ENCODE measurements at regions of chr12 and their contacts with region 1.

Region 1: DNA sequence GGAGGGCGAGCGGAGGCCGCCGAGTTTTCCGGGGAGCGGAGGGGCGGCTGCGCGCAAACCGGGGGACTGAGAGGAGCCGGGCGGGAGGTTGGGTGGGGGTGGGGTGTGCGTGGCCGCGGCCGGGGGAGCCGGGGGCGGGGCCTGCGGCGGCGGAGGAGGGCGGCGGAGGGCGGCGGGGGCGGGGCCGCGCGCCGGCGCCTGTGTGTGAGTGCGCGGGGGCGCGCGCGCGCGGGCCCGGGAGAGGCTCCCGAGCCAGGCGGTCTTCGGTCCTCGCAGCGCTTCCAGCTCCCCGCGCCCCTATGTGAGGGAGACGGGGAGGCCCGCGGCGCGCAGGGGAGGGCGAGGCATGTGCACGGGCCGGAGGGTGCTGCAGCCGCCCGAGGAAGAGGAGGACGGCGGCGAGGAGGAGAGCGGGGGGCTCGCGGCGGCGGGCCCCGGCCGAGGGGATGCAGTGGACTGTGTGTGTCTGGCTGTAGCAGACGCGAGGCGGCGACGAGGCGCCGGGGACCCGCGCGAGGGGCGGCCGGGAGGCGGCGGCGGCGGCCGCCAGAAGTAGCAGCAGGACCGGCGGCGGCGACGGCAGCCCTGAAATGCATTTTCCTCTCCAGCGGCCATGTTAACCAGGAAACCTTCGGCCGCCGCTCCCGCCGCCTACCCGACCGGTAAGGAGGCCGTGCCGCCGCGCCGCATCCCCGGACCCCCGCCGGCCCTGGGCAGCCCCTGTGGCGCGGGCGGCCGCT is at the start of gene DYRK2:
- DNase-seq: no peak
- H3K4me3 ChIP-seq: peak within 1 kb of the TSS; percentile 85 to 100 (median 98)
- H3K27ac ChIP-seq: peak within 1 kb of the TSS; percentile 96 to 99 (median 98)
- H3K4me1 ChIP-seq: peaks cover 24 to 51% (median 48%) of the 10 kb centered on the region in 4 donors
- H3K27me3 ChIP-seq: no peaks in the 10 kb centered on the region
- CTCF ChIP-seq: no peak
- EP300 ChIP-seq: no peak
- POLR2A ChIP-seq: peak; percentile 77
- total RNA-seq, gene DYRK2: 22.2 to 57.9 (median 36.9) TPM

Region 2: DNA sequence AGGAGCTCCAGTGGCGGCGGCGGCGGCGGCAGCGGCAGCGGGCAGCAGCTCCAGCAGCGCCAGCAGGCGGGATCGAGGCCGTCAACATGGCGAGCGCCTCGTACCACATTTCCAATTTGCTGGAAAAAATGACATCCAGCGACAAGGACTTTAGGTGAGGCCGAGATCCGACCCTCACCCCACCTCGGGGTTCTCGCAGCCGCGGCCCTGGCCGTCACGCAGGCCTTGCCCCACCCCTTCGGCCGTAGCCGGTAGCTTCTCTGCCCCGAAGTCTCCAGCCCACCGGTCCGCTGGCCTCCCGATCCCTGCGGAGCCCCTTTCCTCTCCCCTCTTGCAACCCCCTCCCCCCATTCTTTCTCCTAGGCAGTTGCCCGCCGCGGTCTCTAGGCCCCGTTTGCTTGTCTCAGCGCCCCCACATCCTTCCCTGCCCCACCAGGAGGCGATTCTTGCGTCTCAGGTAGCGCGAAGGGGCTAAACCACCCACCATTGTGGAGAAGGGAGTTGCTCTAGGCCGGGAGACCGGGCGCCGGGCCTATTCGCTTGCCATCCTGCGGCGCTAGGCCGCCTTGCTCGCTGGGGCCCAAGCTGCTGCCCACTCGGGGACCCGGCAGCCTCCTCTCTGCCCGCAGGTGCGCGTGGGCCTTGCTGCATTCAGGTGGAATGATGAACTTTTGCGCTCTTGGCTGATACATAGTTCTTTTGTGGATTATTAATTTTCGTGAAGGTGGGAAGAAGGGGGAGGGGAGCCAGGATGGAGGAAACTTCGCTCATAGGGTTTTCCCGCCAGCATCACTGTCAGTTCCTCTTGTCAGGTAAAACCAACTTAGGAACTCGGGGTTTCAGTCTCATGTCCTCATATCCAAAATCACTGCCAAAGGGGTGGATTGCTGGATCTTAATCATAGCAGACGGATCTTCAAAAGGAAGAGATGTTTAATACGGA is 378.8 kb before region 1 on chr12:
- intact Hi-C with region 1: loop called (anchors 10 kb)
- DNase-seq: no peak
- H3K4me3 ChIP-seq: peak overlapping the region; percentile 76 to 95 (median 84)
- H3K27ac ChIP-seq: peak overlapping the region; percentile 95 to 99 (median 97)
- H3K4me1 ChIP-seq: peaks cover 43 to 59% (median 52%) of the 10 kb centered on the region in 4 donors
- H3K27me3 ChIP-seq: no peaks in the 10 kb centered on the region
- CTCF ChIP-seq: peak in 2 of 3 experiments; percentile 2 to 5
- EP300 ChIP-seq: no peak
- POLR2A ChIP-seq: no peak

Region 3: GRCh38 chr12:67430708-67431335 is 217.9 kb before region 1 on chr12:
- intact Hi-C with region 1: loop called (anchors 5 kb)
- DNase-seq: no peak
- H3K4me3 ChIP-seq: no peak overlapping the region
- H3K27ac ChIP-seq: peak overlapping the region; percentile 28 to 59 (median 56)
- H3K4me1 ChIP-seq: peaks cover 16 to 63% (median 41%) of the 10 kb centered on the region in 4 donors
- H3K27me3 ChIP-seq: no peaks in the 10 kb centered on the region
- CTCF ChIP-seq: peak; percentile 35 to 55 (median 44)
- EP300 ChIP-seq: no peak
- POLR2A ChIP-seq: no peak

Region 4: GRCh38 chr12:67758119-67758518 is 109.4 kb after region 1 on chr12:
- intact Hi-C with region 1: no loop called
- DNase-seq: no peak
- H3K4me3 ChIP-seq: no peak overlapping the region
- H3K27ac ChIP-seq: no peak overlapping the region
- H3K4me1 ChIP-seq: peaks cover 14 to 27% (median 21%) of the 10 kb centered on the region in 4 donors
- H3K27me3 ChIP-seq: no peaks in the 10 kb centered on the region
- CTCF ChIP-seq: no peak
- EP300 ChIP-seq: no peak
- POLR2A ChIP-seq: no peak

Region 5: GRCh38 chr12:67827820-67828383 is 179.2 kb after region 1 on chr12:
- intact Hi-C with region 1: loop called (anchors 10 kb)
- DNase-seq: no peak
- H3K4me3 ChIP-seq: peak overlapping the region; percentile 41 to 56 (median 46)
- H3K27ac ChIP-seq: peak overlapping the region; percentile 82 to 87 (median 86)
- H3K4me1 ChIP-seq: peaks cover 12 to 36% (median 33%) of the 10 kb centered on the region in 4 donors
- H3K27me3 ChIP-seq: no peaks in the 10 kb centered on the region
- CTCF ChIP-seq: no peak
- EP300 ChIP-seq: no peak
- POLR2A ChIP-seq: no peak

Region 6: DNA sequence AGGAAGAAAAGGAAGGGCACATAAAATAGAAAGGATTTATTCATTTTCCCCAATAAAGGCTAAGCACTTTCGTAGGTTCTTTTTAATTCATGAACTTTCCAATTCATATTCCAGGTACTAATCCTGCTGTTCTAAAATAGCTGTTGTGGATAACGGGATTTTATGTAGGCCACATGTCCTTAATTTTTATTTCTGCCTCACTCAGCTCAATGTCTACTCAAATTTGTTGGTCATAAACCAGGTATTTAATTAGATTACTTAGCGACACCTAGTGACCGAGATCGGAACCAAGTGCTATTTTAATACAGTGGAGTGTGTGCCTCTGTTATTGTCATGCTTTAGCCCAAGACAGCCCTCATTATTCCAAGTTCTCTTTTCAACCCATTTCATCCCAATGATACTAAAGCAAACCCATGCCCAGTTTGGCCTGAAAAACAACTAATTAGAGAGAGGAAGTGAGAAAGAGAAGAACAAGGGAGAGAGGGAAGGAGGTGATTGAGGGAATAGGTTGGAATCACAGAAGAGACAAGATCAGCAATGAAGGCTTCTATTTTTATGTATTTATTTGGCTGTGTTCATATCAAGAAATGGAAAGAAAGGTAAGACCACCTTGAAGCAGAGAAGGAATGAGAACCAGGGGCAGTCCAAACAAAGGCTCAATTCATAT is 294.7 kb after region 1 on chr12:
- intact Hi-C with region 1: loop called (anchors 5 kb)
- DNase-seq: no peak
- H3K4me3 ChIP-seq: no peak overlapping the region
- H3K27ac ChIP-seq: peak overlapping the region in 1 of 4 donors; percentile 33
- H3K4me1 ChIP-seq: peaks cover 14 to 36% (median 26%) of the 10 kb centered on the region in 4 donors
- H3K27me3 ChIP-seq: no peaks in the 10 kb centered on the region
- CTCF ChIP-seq: peak; percentile 73 to 82 (median 79)
- EP300 ChIP-seq: no peak
- POLR2A ChIP-seq: no peak